Psoas muscle (tissue), 8 donors: ENCODE measurements at regions of chr2 and their contacts with region 1.

Region 1: DNA sequence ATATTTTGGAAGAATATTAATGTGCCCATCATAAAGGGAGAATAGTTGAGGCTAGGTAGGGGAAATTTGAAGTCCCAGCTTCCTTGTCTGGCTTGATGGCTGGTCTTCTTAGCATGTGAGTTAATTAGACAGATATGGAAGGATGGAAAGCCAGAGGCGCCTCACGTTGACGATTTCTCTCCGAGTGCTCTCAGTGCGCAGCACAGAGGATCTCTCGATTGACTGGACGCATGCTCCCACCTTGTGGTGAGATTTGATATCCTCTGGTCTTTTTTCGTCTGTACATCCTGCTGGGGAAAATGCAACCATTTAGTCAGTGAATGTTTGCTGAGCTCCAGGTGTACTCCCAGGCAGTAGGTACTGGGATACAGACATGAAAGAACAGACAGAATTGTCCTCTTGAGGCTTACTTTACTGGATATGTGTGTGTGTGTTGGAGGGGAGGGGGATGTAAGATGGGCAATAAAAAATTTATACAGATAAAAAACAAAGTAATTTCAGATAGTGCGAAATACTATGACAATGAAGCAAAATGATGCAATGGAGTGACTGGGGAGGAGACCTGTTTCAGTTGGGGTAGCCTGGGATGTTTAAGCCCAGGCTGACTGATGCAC is 66.9 kb upstream of the ZNG1B start:
- DNase-seq: peak; percentile 43 to 70
- ATAC-seq: peak; percentile 83 to 97 (median 90)
- H3K4me3 ChIP-seq: no peak overlapping the region
- H3K27ac ChIP-seq: no peak overlapping the region
- H3K4me1 ChIP-seq: no peaks in the 10 kb centered on the region
- H3K27me3 ChIP-seq: no peaks in the 10 kb centered on the region
- CTCF ChIP-seq: peak; percentile 68

Region 2: DNA sequence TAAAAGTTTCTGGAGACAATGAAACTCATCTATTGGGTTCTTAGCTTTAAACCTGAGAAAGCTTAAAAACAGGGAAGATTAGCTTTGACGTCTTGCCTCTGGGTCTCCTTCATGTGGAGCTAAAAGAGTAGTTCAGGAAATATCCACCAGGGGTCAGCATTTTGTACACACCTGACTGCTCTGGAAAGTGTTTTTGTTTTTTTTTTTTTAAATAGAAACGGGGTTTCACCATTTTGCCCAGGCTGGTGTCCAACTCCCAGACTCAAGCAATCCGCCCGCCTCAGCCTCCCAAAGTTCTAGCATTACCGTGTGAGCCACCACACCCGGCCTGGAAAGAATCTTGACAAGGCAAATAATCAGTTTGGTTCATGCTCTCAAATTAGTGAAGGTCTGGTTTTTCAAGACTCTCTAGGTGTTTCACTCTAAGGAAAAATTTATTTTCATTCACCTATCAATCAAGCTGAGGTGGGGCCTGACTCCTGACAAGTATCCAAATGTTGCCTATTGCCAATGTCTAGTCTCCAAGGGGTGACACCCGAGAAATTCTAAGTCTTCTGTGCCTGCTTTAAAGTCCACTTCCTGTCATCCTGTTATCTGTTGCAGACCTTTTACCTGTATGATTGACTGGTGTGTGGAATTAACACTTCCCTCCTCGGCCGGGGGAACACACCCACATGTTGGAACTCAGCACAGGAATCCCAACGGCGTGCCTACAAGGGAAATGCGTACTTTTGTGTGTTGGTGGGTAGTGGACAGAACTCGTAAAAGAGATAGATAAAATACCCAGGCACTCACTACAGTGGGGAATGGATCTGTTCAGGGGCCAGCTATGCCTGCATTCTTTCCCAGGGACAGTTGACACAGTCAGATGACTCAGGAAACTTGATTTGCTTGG is 231.9 kb before region 1 on chr2:
- intact Hi-C with region 1: loop called (anchors 5 to 10 kb)
- DNase-seq: no peak
- ATAC-seq: peak; percentile 42 to 71 (median 51)
- H3K4me3 ChIP-seq: no peak overlapping the region
- H3K27ac ChIP-seq: no peak overlapping the region
- H3K4me1 ChIP-seq: no peaks in the 10 kb centered on the region
- H3K27me3 ChIP-seq: no peaks in the 10 kb centered on the region
- CTCF ChIP-seq: peak; percentile 74

Region 3: GRCh38 chr2:113203901-113204519 is 166.6 kb before region 1 on chr2:
- intact Hi-C with region 1: loop called (anchors 2 to 5 kb)
- DNase-seq: peak; percentile 45 to 73
- ATAC-seq: peak; percentile 67 to 83 (median 82)
- H3K4me3 ChIP-seq: no peak overlapping the region
- H3K27ac ChIP-seq: no peak overlapping the region
- H3K4me1 ChIP-seq: no peaks in the 10 kb centered on the region
- H3K27me3 ChIP-seq: peaks cover 0 to 3% (median 0%) of the 10 kb centered on the region in 3 donors
- CTCF ChIP-seq: peak; percentile 71

Region 4: DNA sequence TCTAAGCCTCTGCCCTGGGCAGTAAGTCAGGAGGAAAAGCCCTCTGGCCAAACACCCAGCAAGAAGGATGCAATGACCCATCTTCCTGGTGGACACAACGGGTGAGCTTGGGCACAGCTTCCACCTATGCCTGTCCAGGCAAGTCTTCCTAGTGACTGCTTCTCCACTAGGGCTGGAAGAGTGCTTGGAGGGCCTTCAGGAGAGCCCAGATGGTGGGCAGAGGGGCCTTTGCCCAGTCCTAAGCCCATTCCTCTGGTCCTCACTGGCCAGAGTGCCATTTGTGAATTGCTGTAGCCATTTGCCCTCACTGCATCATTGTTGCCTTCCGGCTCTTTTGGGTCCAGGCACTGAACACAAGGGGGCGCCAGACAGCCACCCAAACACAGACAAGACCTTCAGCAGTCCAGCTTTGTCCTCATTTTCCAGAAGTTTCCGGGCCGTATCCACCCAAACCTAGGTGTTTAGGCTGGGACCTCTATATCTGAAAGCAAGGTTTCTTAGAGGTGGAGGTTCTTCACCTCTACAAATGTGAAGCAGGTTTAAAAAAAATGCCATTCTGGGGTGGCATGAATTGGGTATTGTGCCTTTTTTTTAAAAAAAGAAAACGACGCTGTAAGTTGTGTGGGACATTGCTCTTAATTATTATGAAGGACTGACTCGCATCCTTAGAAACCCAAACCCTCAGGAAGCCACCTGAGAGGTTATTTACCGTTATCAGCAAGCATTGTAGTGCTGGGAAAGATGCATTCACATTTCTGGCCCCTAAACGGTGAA is 121.4 kb before region 1 on chr2:
- intact Hi-C with region 1: loop called (anchors 1 to 2 kb)
- DNase-seq: peak; percentile 78 to 87
- ATAC-seq: peak; percentile 73 to 93 (median 77)
- H3K4me3 ChIP-seq: no peak overlapping the region
- H3K27ac ChIP-seq: no peak overlapping the region
- H3K4me1 ChIP-seq: no peaks in the 10 kb centered on the region
- H3K27me3 ChIP-seq: peaks cover 0 to 2% (median 0%) of the 10 kb centered on the region in 3 donors
- CTCF ChIP-seq: peak; percentile 90